Activated CD4-positive, alpha-beta memory T cell treated with anti-CD3 and anti-CD28 coated beads, Interleukin-2, amount 10 ng/mL, durations not matched to agents 7 days and 5 days (primary cell): ENCODE measurements at regions of chr19 and their contacts with region 1.

Region 1: DNA sequence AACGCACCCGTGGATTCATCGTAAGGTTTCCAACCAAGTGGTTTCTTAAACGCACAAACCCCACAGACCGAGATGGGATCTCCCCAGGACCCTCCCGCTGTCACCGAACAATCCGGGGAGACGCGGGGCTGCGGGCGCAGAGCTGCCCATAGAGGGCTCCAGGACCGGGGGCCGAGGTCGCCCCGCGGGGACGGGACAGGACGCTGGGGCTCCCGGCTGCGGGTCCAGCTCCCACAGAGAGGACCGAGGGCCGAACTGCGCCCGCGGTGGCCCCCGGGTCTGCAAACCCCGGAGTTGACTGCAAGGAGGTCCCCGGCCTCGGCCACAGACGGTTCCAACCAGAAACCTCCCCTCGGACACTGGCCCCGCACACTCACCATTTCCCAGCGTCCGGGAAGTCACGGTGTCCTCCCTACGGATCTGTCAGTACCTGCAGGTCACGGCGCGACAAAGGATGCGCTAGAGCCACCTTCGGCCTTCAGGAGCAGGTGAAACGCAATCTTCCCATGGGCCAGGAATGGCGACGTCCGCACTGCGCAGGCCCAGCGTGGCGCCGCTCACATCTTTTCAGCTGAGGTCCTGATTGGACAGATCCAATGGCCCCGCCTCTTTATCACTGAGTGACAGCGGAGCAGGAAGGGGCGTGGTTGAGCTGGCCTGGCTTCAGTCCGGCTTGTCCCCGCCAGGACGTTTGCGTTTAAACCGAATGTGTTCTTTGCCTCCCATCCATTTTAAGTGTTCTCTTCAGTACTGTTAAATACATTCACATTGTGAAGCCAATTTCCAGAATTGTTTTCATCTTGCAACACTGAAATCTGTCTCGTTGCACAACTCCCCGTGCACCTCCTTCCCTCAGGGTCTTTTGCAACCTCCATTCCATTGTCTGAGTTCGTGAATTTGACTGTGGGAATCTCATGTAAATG is at the start of gene ZNF14:
- DNase-seq: peak; percentile 92
- H3K4me3 Mint-ChIP-seq: peak within 1 kb of the TSS; percentile 100
- H3K27ac Mint-ChIP-seq: peak within 1 kb of the TSS; percentile 89
- H3K4me1 Mint-ChIP-seq: peaks cover 20% of the 10 kb centered on the region
- H3K27me3 Mint-ChIP-seq: no peaks in the 10 kb centered on the region
- total RNA-seq, gene ZNF14: 8.0 to 8.4 TPM

Region 2: DNA sequence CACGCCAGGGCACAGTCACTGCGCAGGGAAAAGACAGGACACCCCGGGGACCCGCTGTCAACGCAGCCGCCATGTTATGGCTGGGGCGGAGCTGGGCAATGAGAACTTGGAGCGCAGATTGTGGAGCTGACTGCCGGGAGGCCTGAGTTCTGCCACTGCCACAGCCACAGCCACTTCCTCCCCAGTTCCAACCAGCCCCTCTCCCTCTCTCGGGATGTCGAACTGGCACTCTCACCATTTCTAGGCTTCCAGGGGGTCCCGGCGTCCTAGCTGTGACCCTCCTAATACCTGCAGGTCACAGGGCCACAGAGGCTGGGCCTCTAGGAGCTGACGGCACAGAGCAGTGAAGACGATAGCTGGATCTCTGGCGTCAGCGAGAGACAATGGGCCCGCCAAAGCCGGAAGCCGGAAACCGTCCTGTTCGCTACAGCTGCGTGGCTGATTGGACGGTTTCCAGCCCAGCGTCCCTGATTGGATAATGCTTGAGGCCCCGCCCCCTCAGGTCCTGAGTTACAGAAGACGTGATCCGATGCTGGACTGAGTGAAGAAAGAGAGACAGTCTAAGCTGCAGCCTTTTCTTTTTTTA is 88.6 kb after region 1 on chr19 and contains the start of gene ZNF506:
- CTCF ChIA-PET with region 1: no interaction called
- POLR2A ChIA-PET with region 1: interaction called, 13 read pairs
- DNase-seq: peak; percentile 96
- H3K4me3 Mint-ChIP-seq: peak within 1 kb of the TSS; percentile 99
- H3K27ac Mint-ChIP-seq: peak within 1 kb of the TSS; percentile 99
- H3K4me1 Mint-ChIP-seq: peaks cover 29% of the 10 kb centered on the region
- H3K27me3 Mint-ChIP-seq: no peaks in the 10 kb centered on the region
- total RNA-seq, gene ZNF506: 24.6 to 25.5 TPM